ENCODE measurements at regions of chr15 and their contacts with region 1.

Region 1: DNA sequence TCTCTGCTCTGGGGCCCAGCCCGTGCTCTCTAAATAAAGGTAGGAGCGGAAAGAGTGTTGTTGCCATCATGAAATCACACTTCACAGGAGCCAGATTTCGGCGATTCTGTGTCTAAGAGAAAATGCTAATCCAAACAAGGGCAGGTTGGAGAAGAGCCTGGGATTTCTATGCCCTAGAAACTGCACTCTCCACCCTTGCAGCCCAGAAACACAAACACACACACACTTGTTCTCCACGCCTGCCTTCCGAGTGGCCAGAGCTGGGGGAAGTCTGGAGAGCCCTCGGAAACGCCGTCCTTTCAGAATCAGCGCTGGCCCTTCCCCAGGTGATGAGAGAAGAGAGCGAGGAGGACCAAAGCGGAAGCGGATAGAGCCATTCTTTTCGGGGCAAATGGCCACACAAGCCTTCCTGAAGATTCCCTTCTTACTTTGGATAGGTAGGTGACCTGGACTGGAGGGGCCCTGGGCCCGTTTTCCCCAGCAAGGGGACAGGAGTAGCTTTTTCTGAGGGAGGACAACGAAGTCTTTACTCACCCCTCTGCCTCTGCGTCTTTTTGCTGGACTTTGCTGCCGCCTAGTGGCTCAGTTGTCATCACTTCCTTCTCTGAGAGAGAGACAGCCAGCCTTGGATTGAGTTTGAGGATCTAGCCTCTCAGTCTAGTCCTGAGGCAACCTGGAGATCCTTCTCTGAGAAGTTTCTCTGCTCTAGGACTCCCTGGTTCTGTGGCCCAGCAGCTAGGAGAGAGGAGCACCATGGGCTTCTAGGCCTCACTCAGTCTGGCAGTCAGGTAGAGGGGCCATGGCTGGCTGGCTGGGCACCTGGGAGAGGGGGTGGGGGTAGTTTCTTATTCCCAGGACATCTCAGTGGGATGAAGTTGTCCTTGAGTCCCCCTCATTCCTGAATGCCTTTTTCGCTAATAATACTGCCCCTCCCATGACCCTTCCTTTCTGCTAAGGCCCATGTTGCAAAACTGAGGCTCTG is 37.7 kb downstream of the SENP8 start:
- DNase-seq: peak; percentile 66 to 86 (median 80)
- ATAC-seq: peak; percentile 74
- H3K4me3 ChIP-seq: peak overlapping the region; percentile 13 to 30
- H3K4me3 Mint-ChIP-seq: peak overlapping the region; percentile 80
- H3K27ac ChIP-seq: no peak overlapping the region
- H3K27ac Mint-ChIP-seq: no peak overlapping the region
- H3K4me1 ChIP-seq: no peaks in the 10 kb centered on the region
- H3K4me1 Mint-ChIP-seq: peaks cover 4% of the 10 kb centered on the region
- H3K27me3 ChIP-seq: no peaks in the 10 kb centered on the region
- H3K27me3 Mint-ChIP-seq: no peaks in the 10 kb centered on the region
- CTCF ChIP-seq: peak; percentile 90

Region 2: GRCh38 chr15:70435369-70435768 is 1720.6 kb before region 1 on chr15:
- CTCF ChIA-PET with region 1: no interaction called
- POLR2A ChIA-PET with region 1: no interaction called
- intact Hi-C with region 1: no loop called
- DNase-seq: peak in 1 of 9 experiments; percentile 15
- ATAC-seq: peak; percentile 55
- H3K4me3 ChIP-seq: no peak overlapping the region
- H3K4me3 Mint-ChIP-seq: no peak overlapping the region
- H3K27ac ChIP-seq: no peak overlapping the region
- H3K27ac Mint-ChIP-seq: no peak overlapping the region
- H3K4me1 ChIP-seq: peaks cover 20% of the 10 kb centered on the region
- H3K4me1 Mint-ChIP-seq: peaks cover 27% of the 10 kb centered on the region
- H3K27me3 ChIP-seq: no peaks in the 10 kb centered on the region
- H3K27me3 Mint-ChIP-seq: no peaks in the 10 kb centered on the region
- CTCF ChIP-seq: no peak

Region 3: GRCh38 chr15:70826634-70827033 is 1329.3 kb before region 1 on chr15:
- CTCF ChIA-PET with region 1: no interaction called
- POLR2A ChIA-PET with region 1: no interaction called
- intact Hi-C with region 1: loop called in 1 of 2 experiments (anchors 10 kb)
- DNase-seq: no peak
- ATAC-seq: no peak
- H3K4me3 ChIP-seq: no peak overlapping the region
- H3K4me3 Mint-ChIP-seq: no peak overlapping the region
- H3K27ac ChIP-seq: no peak overlapping the region
- H3K27ac Mint-ChIP-seq: no peak overlapping the region
- H3K4me1 ChIP-seq: no peaks in the 10 kb centered on the region
- H3K4me1 Mint-ChIP-seq: no peaks in the 10 kb centered on the region
- H3K27me3 ChIP-seq: peaks cover 0 to 2% of the 10 kb centered on the region in 2 experiments
- H3K27me3 Mint-ChIP-seq: peaks cover 14% of the 10 kb centered on the region
- CTCF ChIP-seq: no peak

Region 4: DNA sequence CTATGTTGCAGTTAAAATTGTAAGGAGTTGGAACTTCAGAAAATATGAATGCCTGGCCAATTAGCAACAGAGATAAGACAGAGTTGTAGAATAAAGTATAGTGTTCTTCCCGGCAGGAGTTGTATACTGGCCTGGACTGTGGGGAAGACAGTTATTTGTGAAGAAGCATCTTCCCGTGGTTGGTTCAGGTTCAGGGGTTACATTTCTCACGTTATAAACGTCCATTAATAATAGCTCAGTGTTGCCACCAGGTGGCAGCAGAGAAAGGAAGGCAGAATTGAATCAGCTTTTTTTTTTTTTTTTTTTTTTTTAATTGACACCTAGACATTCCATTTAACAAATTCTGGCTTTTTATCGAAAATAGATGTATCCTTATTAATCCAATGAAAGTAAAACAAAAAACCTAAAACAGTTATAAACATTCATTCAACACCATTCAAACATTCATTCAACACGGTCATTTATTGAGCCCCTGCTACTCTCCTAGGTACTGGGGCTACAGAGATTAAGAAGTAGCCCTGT is 412.0 kb before region 1 on chr15:
- CTCF ChIA-PET with region 1: interaction called, 71 read pairs
- POLR2A ChIA-PET with region 1: interaction called, 4 read pairs
- intact Hi-C with region 1: loop called in 1 of 2 experiments (anchors 1 kb)
- DNase-seq: peak; percentile 12 to 70 (median 62)
- ATAC-seq: no peak
- H3K4me3 ChIP-seq: no peak overlapping the region
- H3K4me3 Mint-ChIP-seq: no peak overlapping the region
- H3K27ac ChIP-seq: no peak overlapping the region
- H3K27ac Mint-ChIP-seq: no peak overlapping the region
- H3K4me1 ChIP-seq: no peaks in the 10 kb centered on the region
- H3K4me1 Mint-ChIP-seq: no peaks in the 10 kb centered on the region
- H3K27me3 ChIP-seq: no peaks in the 10 kb centered on the region
- H3K27me3 Mint-ChIP-seq: peaks cover 1% of the 10 kb centered on the region
- CTCF ChIP-seq: peak; percentile 86

Region 5: DNA sequence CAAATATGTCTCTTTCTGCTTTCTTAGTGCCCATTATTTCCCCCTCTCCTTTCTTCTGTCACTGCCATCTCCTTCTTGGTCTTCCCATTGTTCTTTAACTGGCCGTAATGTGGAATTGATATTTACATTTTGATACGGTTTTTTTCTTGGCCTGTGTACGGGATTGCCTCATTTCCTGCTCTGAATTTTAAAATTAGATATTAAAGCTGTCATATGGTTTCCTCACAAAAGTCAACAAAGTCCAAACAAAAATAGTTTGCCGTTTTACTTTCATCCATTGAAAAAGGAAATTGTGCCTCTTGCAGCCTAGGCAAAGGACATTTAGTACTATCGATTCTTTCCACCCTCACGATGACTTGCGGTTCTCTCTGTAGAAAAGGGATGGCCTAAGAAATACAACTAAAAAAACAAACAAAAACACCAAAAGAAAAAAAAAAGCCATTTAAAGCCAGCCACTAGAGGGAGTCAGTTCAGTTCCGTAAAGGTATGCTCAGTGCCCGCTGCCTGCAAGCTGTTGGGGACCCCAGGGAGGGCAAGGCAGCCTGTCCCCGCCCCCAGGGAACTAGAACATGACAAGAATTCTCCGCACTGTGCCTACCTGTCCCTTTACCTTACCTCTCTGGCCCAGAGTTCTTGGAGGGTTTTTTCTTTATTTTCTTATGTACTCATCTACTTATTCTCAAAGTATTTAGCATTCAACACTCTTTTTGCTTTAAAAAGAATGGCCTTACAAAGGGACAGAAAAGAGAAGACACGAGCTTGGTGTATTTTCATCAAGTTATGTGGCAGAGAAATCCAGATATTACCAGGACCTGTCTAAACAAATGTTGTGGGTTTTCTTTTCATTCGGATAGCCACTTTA is 375.6 kb before region 1 on chr15:
- CTCF ChIA-PET with region 1: interaction called, 53 read pairs
- POLR2A ChIA-PET with region 1: no interaction called
- intact Hi-C with region 1: loop called (anchors 1 kb)
- DNase-seq: peak in 6 of 9 experiments; percentile 26 to 64 (median 47)
- ATAC-seq: peak; percentile 42
- H3K4me3 ChIP-seq: no peak overlapping the region
- H3K4me3 Mint-ChIP-seq: no peak overlapping the region
- H3K27ac ChIP-seq: no peak overlapping the region
- H3K27ac Mint-ChIP-seq: no peak overlapping the region
- H3K4me1 ChIP-seq: no peaks in the 10 kb centered on the region
- H3K4me1 Mint-ChIP-seq: peaks cover 3% of the 10 kb centered on the region
- H3K27me3 ChIP-seq: no peaks in the 10 kb centered on the region
- H3K27me3 Mint-ChIP-seq: peaks cover 12% of the 10 kb centered on the region
- CTCF ChIP-seq: peak; percentile 80

Region 6: GRCh38 chr15:72141171-72142084 is 14.5 kb before region 1 on chr15:
- CTCF ChIA-PET with region 1: interaction called, 13 read pairs
- POLR2A ChIA-PET with region 1: no interaction called
- intact Hi-C with region 1: no loop called
- DNase-seq: no peak
- ATAC-seq: no peak
- H3K4me3 ChIP-seq: no peak overlapping the region
- H3K4me3 Mint-ChIP-seq: no peak overlapping the region
- H3K27ac ChIP-seq: no peak overlapping the region
- H3K27ac Mint-ChIP-seq: no peak overlapping the region
- H3K4me1 ChIP-seq: no peaks in the 10 kb centered on the region
- H3K4me1 Mint-ChIP-seq: no peaks in the 10 kb centered on the region
- H3K27me3 ChIP-seq: no peaks in the 10 kb centered on the region
- H3K27me3 Mint-ChIP-seq: no peaks in the 10 kb centered on the region
- CTCF ChIP-seq: no peak

Measured in CD8-positive, alpha-beta T cell (primary cell).